CD4-positive, alpha-beta T cell (primary cell): ENCODE measurements at regions of chr2 and their contacts with region 1.

Region 1: DNA sequence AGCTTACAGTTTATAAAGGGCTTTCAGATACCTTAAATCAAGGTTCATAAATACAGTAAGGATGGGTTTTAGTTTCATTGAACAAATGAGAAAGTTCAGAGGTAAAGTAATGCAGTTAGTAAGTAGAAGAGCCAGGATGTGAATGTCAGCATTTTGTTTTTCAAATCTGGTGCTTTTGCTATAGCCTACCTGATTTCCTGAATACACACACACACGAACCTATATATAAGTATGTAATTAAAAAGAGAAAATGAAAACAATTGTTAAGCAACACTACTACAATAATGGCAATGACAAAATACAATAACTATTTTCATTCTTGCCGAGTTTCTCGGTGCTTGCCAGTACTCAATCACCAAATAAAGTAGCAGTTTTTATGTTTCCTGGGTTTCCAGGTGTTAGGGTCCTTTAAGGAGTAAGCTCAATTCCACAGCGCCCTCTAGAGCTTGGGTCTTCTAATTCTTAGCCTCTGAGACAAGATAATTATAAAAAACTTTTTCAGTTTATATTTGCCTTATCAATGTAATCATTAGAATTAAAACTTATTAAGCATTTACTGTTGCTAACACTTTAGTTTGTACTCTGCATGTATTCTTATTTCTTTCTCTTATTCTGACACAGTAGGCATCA is 512.9 kb upstream of the ACVR2A start:
- DNase-seq: peak in 13 of 14 experiments; percentile 4 to 69 (median 43)
- ATAC-seq: peak; percentile 41
- H3K4me3 ChIP-seq: no peak overlapping the region
- H3K4me3 Mint-ChIP-seq: no peak overlapping the region
- H3K27ac ChIP-seq: no peak overlapping the region
- H3K27ac Mint-ChIP-seq: no peak overlapping the region
- H3K4me1 ChIP-seq: no peaks in the 10 kb centered on the region
- H3K4me1 Mint-ChIP-seq: peaks cover 13% of the 10 kb centered on the region
- H3K27me3 ChIP-seq: no peaks in the 10 kb centered on the region
- H3K27me3 Mint-ChIP-seq: peaks cover 5% of the 10 kb centered on the region
- CTCF ChIP-seq: peak; percentile 47

Region 2: GRCh38 chr2:145957929-145958328 is 1374.0 kb before region 1 on chr2:
- CTCF ChIA-PET with region 1: no interaction called
- POLR2A ChIA-PET with region 1: no interaction called
- intact Hi-C with region 1: no loop called
- DNase-seq: no peak
- ATAC-seq: no peak
- H3K4me3 ChIP-seq: no peak overlapping the region
- H3K4me3 Mint-ChIP-seq: no peak overlapping the region
- H3K27ac ChIP-seq: no peak overlapping the region
- H3K27ac Mint-ChIP-seq: no peak overlapping the region
- H3K4me1 ChIP-seq: no peaks in the 10 kb centered on the region
- H3K4me1 Mint-ChIP-seq: no peaks in the 10 kb centered on the region
- H3K27me3 ChIP-seq: no peaks in the 10 kb centered on the region
- H3K27me3 Mint-ChIP-seq: no peaks in the 10 kb centered on the region
- CTCF ChIP-seq: no peak

Region 3: GRCh38 chr2:147082850-147083522 is 248.9 kb before region 1 on chr2:
- CTCF ChIA-PET with region 1: interaction called, 6 read pairs
- POLR2A ChIA-PET with region 1: no interaction called
- intact Hi-C with region 1: loop called (anchors 5 kb)
- DNase-seq: peak in 12 of 14 experiments; percentile 7 to 73 (median 40)
- ATAC-seq: peak; percentile 69
- H3K4me3 ChIP-seq: no peak overlapping the region
- H3K4me3 Mint-ChIP-seq: no peak overlapping the region
- H3K27ac ChIP-seq: no peak overlapping the region
- H3K27ac Mint-ChIP-seq: no peak overlapping the region
- H3K4me1 ChIP-seq: no peaks in the 10 kb centered on the region
- H3K4me1 Mint-ChIP-seq: no peaks in the 10 kb centered on the region
- H3K27me3 ChIP-seq: no peaks in the 10 kb centered on the region
- H3K27me3 Mint-ChIP-seq: peaks cover 3% of the 10 kb centered on the region
- CTCF ChIP-seq: peak; percentile 83

Region 4: GRCh38 chr2:147297820-147298219 is 34.1 kb before region 1 on chr2:
- CTCF ChIA-PET with region 1: interaction called, 3 read pairs
- POLR2A ChIA-PET with region 1: no interaction called
- intact Hi-C with region 1: loop called (anchors 5 kb)
- DNase-seq: peak in 8 of 14 experiments; percentile 3 to 78 (median 28)
- ATAC-seq: peak; percentile 78
- H3K4me3 ChIP-seq: no peak overlapping the region
- H3K4me3 Mint-ChIP-seq: peak overlapping the region; percentile 48
- H3K27ac ChIP-seq: peak overlapping the region in 1 of 2 donors; percentile 53
- H3K27ac Mint-ChIP-seq: peak overlapping the region; percentile 87
- H3K4me1 ChIP-seq: peaks cover 24% of the 10 kb centered on the region
- H3K4me1 Mint-ChIP-seq: peaks cover 55% of the 10 kb centered on the region
- H3K27me3 ChIP-seq: no peaks in the 10 kb centered on the region
- H3K27me3 Mint-ChIP-seq: no peaks in the 10 kb centered on the region
- CTCF ChIP-seq: no peak

Region 5: GRCh38 chr2:147560810-147561535 is 229.1 kb after region 1 on chr2:
- CTCF ChIA-PET with region 1: no interaction called
- POLR2A ChIA-PET with region 1: no interaction called
- intact Hi-C with region 1: no loop called
- DNase-seq: peak in 3 of 14 experiments; percentile 16 to 48 (median 44)
- ATAC-seq: no peak
- H3K4me3 ChIP-seq: no peak overlapping the region
- H3K4me3 Mint-ChIP-seq: no peak overlapping the region
- H3K27ac ChIP-seq: no peak overlapping the region
- H3K27ac Mint-ChIP-seq: no peak overlapping the region
- H3K4me1 ChIP-seq: no peaks in the 10 kb centered on the region
- H3K4me1 Mint-ChIP-seq: peaks cover 6% of the 10 kb centered on the region
- H3K27me3 ChIP-seq: no peaks in the 10 kb centered on the region
- H3K27me3 Mint-ChIP-seq: no peaks in the 10 kb centered on the region
- CTCF ChIP-seq: no peak